Right cardiac atrium (tissue), 5 donors: ENCODE measurements at regions of chr4 and their contacts with region 1.

Region 1: GRCh38 chr4:57043347-57044251 is 64.9 kb downstream of the POLR2B start:
- DNase-seq: peak in 2 of 3 donors; percentile 58 to 61
- ATAC-seq: peak; percentile 75 to 85
- H3K4me3 ChIP-seq: no peak overlapping the region
- H3K27ac ChIP-seq: peak overlapping the region; percentile 95
- H3K4me1 ChIP-seq: peaks cover 11% of the 10 kb centered on the region
- H3K27me3 ChIP-seq: no peaks in the 10 kb centered on the region

Region 2: DNA sequence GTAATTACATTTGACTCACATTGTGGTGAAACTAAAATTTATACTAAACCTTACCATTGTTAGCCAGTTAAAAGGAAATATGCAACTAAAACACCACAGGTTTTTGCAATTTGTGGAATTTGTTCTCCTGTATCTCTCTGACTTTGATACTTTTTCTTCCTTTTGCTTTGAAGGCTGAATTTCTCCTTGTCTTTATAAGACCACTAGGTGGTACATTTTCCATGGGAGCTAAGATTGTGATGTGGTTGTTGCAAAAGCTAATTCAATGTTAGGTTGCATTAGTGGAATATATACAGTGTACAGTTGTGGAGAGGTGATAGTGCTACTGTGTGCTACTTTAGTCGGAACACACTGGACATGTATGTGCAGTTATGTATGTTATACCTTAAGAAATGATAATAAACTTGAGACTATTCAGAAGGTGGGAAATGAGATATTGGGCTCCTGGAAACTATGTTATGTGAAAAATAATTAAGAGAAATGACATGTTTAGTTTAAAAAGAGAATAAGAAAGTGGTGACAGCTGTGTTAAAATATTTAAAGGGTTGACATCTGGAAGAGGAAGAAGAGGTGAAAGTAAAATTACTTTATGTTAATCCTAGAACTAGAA is 467.7 kb before region 1 on chr4:
- intact Hi-C with region 1: no loop called
- DNase-seq: no peak
- ATAC-seq: no peak
- H3K4me3 ChIP-seq: no peak overlapping the region
- H3K27ac ChIP-seq: no peak overlapping the region
- H3K4me1 ChIP-seq: no peaks in the 10 kb centered on the region
- H3K27me3 ChIP-seq: no peaks in the 10 kb centered on the region

Region 3: DNA sequence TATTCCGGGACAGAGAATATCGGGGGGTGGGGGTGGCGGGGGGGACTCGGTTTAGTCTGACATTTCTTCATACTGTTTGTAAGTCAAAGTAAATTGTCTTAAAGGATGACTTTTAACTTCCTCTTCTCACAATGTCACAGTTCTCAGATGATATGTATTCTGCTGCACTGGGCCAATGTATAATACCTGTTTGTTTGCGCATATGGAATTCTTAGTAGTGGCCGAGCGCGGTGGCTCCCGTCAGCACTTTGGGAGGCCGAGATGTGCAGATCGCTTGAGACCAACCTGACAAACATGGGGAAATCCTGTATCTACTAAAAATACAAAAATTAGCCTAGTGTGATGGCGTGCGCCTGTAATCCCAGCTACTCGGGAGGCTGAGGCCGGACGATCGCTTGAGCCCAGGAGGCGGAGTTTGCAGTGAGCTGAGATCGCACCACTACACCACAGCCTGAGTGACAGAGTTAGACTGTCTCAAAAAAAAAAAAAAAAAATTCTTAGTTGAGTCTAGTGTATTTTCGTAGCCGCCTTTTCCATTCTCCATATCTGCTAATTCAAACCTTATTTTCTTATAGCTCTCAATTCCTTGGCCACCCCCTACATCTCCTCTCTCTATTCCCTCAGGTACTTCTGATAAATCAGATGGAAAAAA is 64.1 kb before region 1 on chr4:
- intact Hi-C with region 1: no loop called
- DNase-seq: peak in 2 of 3 donors; percentile 24 to 45
- ATAC-seq: no peak
- H3K4me3 ChIP-seq: peak overlapping the region; percentile 99
- H3K27ac ChIP-seq: peak overlapping the region; percentile 100
- H3K4me1 ChIP-seq: peaks cover 10% of the 10 kb centered on the region
- H3K27me3 ChIP-seq: no peaks in the 10 kb centered on the region

Region 4: GRCh38 chr4:57110640-57111511 is 67.3 kb after region 1 on chr4:
- intact Hi-C with region 1: loop called (anchors 5 to 10 kb)
- DNase-seq: peak; percentile 42 to 81 (median 79)
- ATAC-seq: peak; percentile 64 to 70
- H3K4me3 ChIP-seq: peak overlapping the region; percentile 82
- H3K27ac ChIP-seq: peak overlapping the region; percentile 91
- H3K4me1 ChIP-seq: no peaks in the 10 kb centered on the region
- H3K27me3 ChIP-seq: no peaks in the 10 kb centered on the region

Region 5: GRCh38 chr4:57158221-57158620 is 114.6 kb after region 1 on chr4:
- intact Hi-C with region 1: loop called in 1 of 4 experiments (anchors 5 kb)
- DNase-seq: no peak
- ATAC-seq: peak in 1 of 2 donors; percentile 34
- H3K4me3 ChIP-seq: no peak overlapping the region
- H3K27ac ChIP-seq: no peak overlapping the region
- H3K4me1 ChIP-seq: no peaks in the 10 kb centered on the region
- H3K27me3 ChIP-seq: no peaks in the 10 kb centered on the region